CD8-positive, alpha-beta T cell (primary cell): ENCODE measurements at regions of chr17 and their contacts with region 1.

Region 1: DNA sequence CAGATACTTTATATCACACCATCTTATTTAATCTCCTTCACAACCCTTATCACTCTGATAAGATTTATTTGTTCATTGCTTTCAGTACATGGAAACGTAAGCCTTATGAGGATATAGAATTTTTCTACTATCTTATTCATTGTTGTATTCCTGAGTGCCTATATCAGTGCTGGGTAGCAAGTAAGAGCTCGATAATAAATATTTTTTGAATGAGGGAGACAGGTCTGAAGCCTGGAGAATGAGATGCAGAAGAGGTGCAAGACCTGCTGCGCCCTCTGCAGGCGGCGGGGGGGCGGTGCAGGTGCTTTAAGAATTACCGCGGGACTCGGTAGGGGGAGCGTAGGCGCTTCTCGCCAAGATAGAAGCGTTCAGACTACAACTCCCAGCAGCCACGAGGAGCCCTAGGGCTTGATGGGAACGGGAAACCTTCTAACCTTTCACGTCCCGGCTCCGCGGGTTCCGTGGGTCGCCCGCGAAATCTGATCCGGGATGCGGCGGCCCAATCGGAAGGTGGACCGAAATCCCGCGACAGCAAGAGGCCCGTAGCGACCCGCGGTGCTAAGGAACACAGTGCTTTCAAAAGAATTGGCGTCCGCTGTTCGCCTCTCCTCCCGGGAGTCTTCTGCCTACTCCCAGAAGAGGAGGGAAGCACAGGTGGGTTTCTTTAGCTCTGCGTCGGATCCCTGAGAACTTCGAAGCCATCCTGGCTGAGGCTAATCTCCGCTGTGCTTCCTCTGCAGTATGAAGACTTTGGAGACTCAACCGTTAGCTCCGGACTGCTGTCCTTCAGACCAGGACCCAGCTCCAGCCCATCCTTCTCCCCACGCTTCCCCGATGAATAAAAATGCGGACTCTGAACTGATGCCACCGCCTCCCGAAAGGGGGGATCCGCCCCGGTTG is at the start of gene WRAP53:
- DNase-seq: peak; percentile 93 to 97 (median 95)
- ATAC-seq: peak; percentile 77
- H3K4me3 ChIP-seq: peak within 1 kb of the TSS; percentile 81 to 92
- H3K4me3 Mint-ChIP-seq: peak within 1 kb of the TSS; percentile 97
- H3K27ac ChIP-seq: peak within 1 kb of the TSS; percentile 98 to 100
- H3K27ac Mint-ChIP-seq: peak within 1 kb of the TSS; percentile 100
- H3K4me1 ChIP-seq: peaks cover 32% of the 10 kb centered on the region
- H3K4me1 Mint-ChIP-seq: peaks cover 37% of the 10 kb centered on the region
- H3K27me3 ChIP-seq: no peaks in the 10 kb centered on the region
- H3K27me3 Mint-ChIP-seq: no peaks in the 10 kb centered on the region
- CTCF ChIP-seq: peak; percentile 98
- total RNA-seq, gene WRAP53: 5.2 to 6.6 TPM

Region 2: GRCh38 chr17:7214300-7215135 is 473.6 kb before region 1 on chr17:
- CTCF ChIA-PET with region 1: no interaction called
- POLR2A ChIA-PET with region 1: interaction called, 5 read pairs
- intact Hi-C with region 1: loop called in 1 of 2 experiments (anchors 5 kb)
- DNase-seq: peak; percentile 97 to 100 (median 98)
- ATAC-seq: peak; percentile 75
- H3K4me3 ChIP-seq: peak overlapping the region; percentile 36 to 56
- H3K4me3 Mint-ChIP-seq: peak overlapping the region; percentile 90
- H3K27ac ChIP-seq: peak overlapping the region; percentile 80 to 95
- H3K27ac Mint-ChIP-seq: peak overlapping the region; percentile 95
- H3K4me1 ChIP-seq: peaks cover 51% of the 10 kb centered on the region
- H3K4me1 Mint-ChIP-seq: peaks cover 61% of the 10 kb centered on the region
- H3K27me3 ChIP-seq: no peaks in the 10 kb centered on the region
- H3K27me3 Mint-ChIP-seq: no peaks in the 10 kb centered on the region
- CTCF ChIP-seq: peak; percentile 52

Region 3: GRCh38 chr17:7336240-7337175 is 351.6 kb before region 1 on chr17 and contains the start of gene ACAP1:
- CTCF ChIA-PET with region 1: interaction called, 3 read pairs
- POLR2A ChIA-PET with region 1: interaction called, 12 read pairs
- intact Hi-C with region 1: no loop called
- DNase-seq: peak; percentile 72 to 93 (median 89)
- ATAC-seq: peak; percentile 98
- H3K4me3 ChIP-seq: peak within 1 kb of the TSS; percentile 74 to 76
- H3K4me3 Mint-ChIP-seq: peak within 1 kb of the TSS; percentile 94
- H3K27ac ChIP-seq: peak within 1 kb of the TSS; percentile 60 to 65
- H3K27ac Mint-ChIP-seq: peak within 1 kb of the TSS; percentile 97
- H3K4me1 ChIP-seq: peaks cover 55% of the 10 kb centered on the region
- H3K4me1 Mint-ChIP-seq: peaks cover 61% of the 10 kb centered on the region
- H3K27me3 ChIP-seq: no peaks in the 10 kb centered on the region
- H3K27me3 Mint-ChIP-seq: no peaks in the 10 kb centered on the region
- CTCF ChIP-seq: no peak
- total RNA-seq, gene ACAP1: 432 to 451 TPM

Region 4: DNA sequence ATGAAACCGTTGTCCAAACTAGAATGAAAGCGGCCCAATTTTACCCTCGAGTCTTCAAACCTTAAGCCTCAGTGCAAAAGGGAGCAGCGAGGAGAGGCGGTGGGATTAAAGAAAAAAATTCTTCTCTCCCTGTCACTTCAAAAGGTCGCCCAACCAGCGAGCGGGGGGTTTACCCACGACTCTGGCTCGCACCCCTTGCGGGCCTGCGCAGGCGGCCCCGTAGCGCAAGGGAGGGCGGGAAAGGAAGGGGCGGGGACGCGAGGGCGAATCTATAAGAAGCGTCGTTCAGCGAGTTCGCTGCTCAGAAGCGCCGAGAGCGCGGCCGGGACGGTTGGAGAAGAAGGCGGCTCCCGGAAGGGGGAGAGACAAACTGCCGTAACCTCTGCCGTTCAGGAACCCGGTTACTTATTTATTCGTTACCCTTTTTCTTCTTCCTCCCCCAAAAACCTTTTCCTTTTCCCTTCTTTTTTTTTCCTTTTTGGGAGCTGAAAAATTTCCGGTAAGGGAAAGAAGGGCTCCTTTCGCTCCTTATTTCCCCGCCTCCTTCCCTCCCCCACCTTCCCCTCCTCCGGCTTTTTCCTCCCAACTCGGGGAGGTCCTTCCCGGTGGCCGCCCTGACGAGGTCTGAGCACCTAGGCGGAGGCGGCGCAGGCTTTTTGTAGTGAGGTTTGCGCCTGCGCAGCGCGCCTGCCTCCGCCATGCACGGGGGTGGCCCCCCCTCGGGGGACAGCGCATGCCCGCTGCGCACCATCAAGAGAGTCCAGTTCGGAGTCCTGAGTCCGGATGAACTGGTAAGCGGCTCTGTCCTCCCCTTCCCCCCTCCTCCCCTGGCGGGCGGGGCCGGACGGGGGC is 203.9 kb before region 1 on chr17 and contains the start of gene POLR2A:
- CTCF ChIA-PET with region 1: interaction called, 3 read pairs
- POLR2A ChIA-PET with region 1: interaction called, 37 read pairs
- intact Hi-C with region 1: no loop called
- DNase-seq: peak; percentile 96 to 99 (median 98)
- ATAC-seq: peak; percentile 66
- H3K4me3 ChIP-seq: peak within 1 kb of the TSS; percentile 95 to 98
- H3K4me3 Mint-ChIP-seq: peak within 1 kb of the TSS; percentile 100
- H3K27ac ChIP-seq: peak within 1 kb of the TSS; percentile 99 to 100
- H3K27ac Mint-ChIP-seq: peak within 1 kb of the TSS; percentile 100
- H3K4me1 ChIP-seq: peaks cover 58% of the 10 kb centered on the region
- H3K4me1 Mint-ChIP-seq: peaks cover 74% of the 10 kb centered on the region
- H3K27me3 ChIP-seq: no peaks in the 10 kb centered on the region
- H3K27me3 Mint-ChIP-seq: no peaks in the 10 kb centered on the region
- CTCF ChIP-seq: no peak
- total RNA-seq, gene POLR2A: 508 to 546 TPM

Region 5: DNA sequence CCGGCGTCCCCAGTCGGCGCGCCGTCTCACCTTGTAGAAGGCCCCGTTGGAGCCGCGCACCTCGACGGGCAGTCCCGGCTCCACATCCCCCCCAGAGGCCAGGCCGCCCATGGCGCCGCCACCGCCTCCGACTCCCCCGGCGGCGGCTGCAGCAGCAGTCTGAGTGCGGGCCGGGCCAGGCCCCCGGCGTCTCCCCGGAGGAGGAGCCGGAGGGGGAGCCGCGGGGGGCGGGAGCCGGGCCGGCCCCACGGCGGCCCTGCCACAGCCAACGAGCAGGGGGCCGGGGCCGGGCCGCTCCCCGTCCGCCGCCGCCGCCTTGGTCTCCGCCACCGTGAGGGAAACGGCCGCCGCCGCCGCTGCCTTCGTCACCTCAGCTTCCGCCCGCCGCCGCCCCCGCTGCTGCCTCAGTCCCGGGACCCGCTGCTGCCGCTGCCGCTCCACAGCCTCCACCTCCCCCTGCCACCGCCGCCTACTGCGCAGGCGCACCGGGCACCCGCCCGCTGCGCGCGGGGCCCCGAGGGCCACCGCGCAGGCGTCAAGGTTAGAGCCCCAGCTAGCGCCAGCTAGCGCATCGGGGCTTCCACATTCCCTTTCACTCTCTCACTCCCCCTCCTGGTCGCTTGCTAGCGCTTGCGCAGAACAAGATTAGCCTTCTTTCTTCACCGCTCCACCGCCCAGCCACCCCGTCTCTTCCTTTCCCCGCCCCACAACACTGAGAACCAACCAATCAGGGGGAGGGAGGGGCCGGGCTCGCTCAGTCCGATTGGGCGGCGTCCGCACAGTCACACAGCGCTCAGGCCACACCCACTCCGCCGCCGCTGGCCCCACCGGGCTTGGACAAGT is 73.5 kb before region 1 on chr17 and contains the start of gene FXR2:
- CTCF ChIA-PET with region 1: interaction called, 22 read pairs
- POLR2A ChIA-PET with region 1: interaction called, 46 read pairs
- intact Hi-C with region 1: loop called (anchors 1 kb)
- DNase-seq: peak; percentile 96 to 100 (median 98)
- ATAC-seq: peak; percentile 87
- H3K4me3 ChIP-seq: peak within 1 kb of the TSS; percentile 78 to 86
- H3K4me3 Mint-ChIP-seq: peak within 1 kb of the TSS; percentile 89
- H3K27ac ChIP-seq: peak within 1 kb of the TSS; percentile 70 to 89
- H3K27ac Mint-ChIP-seq: peak within 1 kb of the TSS; percentile 96
- H3K4me1 ChIP-seq: peaks cover 30% of the 10 kb centered on the region
- H3K4me1 Mint-ChIP-seq: peaks cover 38% of the 10 kb centered on the region
- H3K27me3 ChIP-seq: no peaks in the 10 kb centered on the region
- H3K27me3 Mint-ChIP-seq: no peaks in the 10 kb centered on the region
- CTCF ChIP-seq: peak; percentile 39
- total RNA-seq, gene FXR2: 18.8 to 21.7 TPM

Region 6: DNA sequence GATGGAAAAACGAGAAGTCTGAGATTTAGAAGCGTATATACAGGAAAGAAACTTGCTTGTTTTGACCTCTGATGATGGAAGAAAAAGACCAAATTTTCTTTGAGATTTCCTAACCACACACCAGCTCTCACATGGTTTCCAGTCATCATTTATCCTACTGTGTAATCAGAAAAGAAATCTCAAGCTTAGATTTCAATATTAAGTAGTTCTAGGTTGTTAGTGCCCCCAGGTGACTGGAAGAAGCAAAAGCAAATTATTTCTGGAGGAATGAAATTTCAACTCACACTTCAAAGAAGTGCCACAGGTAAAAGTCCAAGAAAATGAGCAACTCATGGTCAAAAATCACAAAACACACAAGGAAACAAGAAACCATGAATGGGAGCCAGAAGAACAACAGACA is 94.1 kb after region 1 on chr17:
- CTCF ChIA-PET with region 1: no interaction called
- POLR2A ChIA-PET with region 1: no interaction called
- intact Hi-C with region 1: no loop called
- DNase-seq: no peak
- ATAC-seq: no peak
- H3K4me3 ChIP-seq: no peak overlapping the region
- H3K4me3 Mint-ChIP-seq: no peak overlapping the region
- H3K27ac ChIP-seq: no peak overlapping the region
- H3K27ac Mint-ChIP-seq: no peak overlapping the region
- H3K4me1 ChIP-seq: no peaks in the 10 kb centered on the region
- H3K4me1 Mint-ChIP-seq: no peaks in the 10 kb centered on the region
- H3K27me3 ChIP-seq: no peaks in the 10 kb centered on the region
- H3K27me3 Mint-ChIP-seq: peaks cover 9% of the 10 kb centered on the region
- CTCF ChIP-seq: no peak

Region 7: DNA sequence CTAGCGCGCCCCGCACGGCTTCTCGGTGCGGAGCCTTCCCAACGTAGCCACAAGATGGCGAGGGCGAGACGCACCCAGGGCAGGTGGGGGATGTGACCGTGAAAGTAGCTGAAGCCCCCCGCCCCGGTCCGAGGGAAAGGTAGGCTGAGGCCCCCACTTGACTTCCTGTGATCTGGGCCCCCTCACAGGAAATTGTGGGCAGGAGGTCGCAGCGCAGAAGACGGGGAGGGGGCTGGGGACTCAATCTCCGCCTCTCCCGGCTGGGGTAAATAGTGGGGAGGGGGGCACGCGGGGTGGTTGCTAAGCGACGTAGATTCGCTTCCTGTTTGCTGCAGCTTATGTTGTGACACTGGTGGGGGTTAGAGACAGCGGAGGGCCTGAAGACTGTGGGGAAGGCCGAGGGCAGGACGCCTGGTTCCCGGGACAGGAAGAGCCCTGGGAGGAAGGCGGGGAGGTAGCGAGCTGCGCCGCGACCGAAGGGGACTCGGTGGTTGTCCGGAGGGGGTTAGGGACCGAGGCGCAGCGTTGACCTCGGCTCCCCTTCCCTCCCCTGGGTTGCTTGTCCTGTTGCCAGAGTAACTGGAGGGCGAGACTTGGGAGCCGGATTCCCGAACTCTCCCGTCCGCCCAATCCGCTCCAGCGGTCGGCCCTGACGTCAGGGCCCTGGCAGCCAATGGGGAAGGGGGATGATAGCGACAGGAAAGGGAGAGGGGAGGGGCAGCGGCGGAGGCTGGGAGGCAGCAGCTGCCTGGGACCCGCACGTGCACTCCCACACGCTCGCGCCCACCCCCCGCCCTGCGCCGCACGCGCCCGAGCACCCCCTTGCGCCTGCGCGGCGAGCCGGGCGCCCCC is 147.0 kb after region 1 on chr17:
- CTCF ChIA-PET with region 1: interaction called, 3 read pairs
- POLR2A ChIA-PET with region 1: interaction called, 14 read pairs
- intact Hi-C with region 1: loop called (anchors 2 to 5 kb)
- DNase-seq: peak; percentile 75 to 98 (median 85)
- ATAC-seq: peak; percentile 54
- H3K4me3 ChIP-seq: peak overlapping the region; percentile 90 to 97
- H3K4me3 Mint-ChIP-seq: peak overlapping the region; percentile 96
- H3K27ac ChIP-seq: peak overlapping the region; percentile 99
- H3K27ac Mint-ChIP-seq: peak overlapping the region; percentile 99
- H3K4me1 ChIP-seq: peaks cover 45% of the 10 kb centered on the region
- H3K4me1 Mint-ChIP-seq: peaks cover 45% of the 10 kb centered on the region
- H3K27me3 ChIP-seq: no peaks in the 10 kb centered on the region
- H3K27me3 Mint-ChIP-seq: no peaks in the 10 kb centered on the region
- CTCF ChIP-seq: peak; percentile 69

Region 8: GRCh38 chr17:7903154-7904103 is 215.3 kb after region 1 on chr17:
- CTCF ChIA-PET with region 1: no interaction called
- POLR2A ChIA-PET with region 1: no interaction called
- intact Hi-C with region 1: no loop called
- DNase-seq: no peak
- ATAC-seq: no peak
- H3K4me3 ChIP-seq: no peak overlapping the region
- H3K4me3 Mint-ChIP-seq: no peak overlapping the region
- H3K27ac ChIP-seq: no peak overlapping the region
- H3K27ac Mint-ChIP-seq: peak overlapping the region; percentile 66
- H3K4me1 ChIP-seq: no peaks in the 10 kb centered on the region
- H3K4me1 Mint-ChIP-seq: no peaks in the 10 kb centered on the region
- H3K27me3 ChIP-seq: no peaks in the 10 kb centered on the region
- H3K27me3 Mint-ChIP-seq: no peaks in the 10 kb centered on the region
- CTCF ChIP-seq: no peak

Region 9: GRCh38 chr17:8038954-8039610 is 350.9 kb after region 1 on chr17 and contains the start of gene ALOX15B:
- CTCF ChIA-PET with region 1: no interaction called
- POLR2A ChIA-PET with region 1: no interaction called
- intact Hi-C with region 1: no loop called
- DNase-seq: no peak
- ATAC-seq: no peak
- H3K4me3 ChIP-seq: no peak within 1 kb of the TSS
- H3K4me3 Mint-ChIP-seq: peak within 1 kb of the TSS; percentile 26
- H3K27ac ChIP-seq: no peak within 1 kb of the TSS
- H3K27ac Mint-ChIP-seq: no peak within 1 kb of the TSS
- H3K4me1 ChIP-seq: peaks cover 4% of the 10 kb centered on the region
- H3K4me1 Mint-ChIP-seq: peaks cover 2% of the 10 kb centered on the region
- H3K27me3 ChIP-seq: peaks cover 0 to 8% of the 10 kb centered on the region in 2 experiments
- H3K27me3 Mint-ChIP-seq: peaks cover 23% of the 10 kb centered on the region
- CTCF ChIP-seq: no peak
- total RNA-seq, gene ALOX15B: not detected

Region 10: DNA sequence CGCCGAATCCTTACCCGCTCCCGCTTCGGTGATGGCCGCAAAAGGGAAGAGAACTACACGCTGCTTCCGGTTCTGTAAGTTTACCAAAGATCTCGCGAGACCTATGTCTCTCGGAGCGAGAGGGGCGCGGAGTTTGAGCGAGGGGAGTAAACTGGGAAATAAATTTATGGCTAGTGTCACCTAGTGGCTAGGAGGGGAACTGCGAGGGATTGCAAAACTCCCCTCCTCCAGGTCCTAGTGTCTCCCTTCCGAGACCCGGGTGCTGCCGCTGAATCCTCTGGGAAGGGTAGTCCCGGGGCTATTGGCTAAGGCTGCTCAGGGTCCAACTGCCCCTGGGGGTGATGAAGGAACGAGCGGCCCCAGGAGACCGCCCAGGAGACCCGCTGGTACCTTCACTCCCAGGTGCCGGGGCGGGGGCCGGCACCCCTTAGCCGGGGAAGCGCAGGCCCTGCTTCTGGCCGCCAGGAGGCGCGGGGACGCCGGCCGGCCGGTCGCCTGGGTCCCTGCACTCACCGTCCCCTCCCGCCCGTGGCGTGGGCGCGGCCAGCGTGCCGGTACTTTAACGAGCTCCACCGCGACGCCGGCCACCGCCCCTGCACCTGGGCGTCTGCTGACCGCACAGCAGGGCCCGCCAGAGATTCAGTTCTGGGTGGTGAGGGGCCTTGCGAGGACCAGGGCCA is 695.1 kb after region 1 on chr17 and contains the start of gene RPL26:
- CTCF ChIA-PET with region 1: no interaction called
- POLR2A ChIA-PET with region 1: no interaction called
- intact Hi-C with region 1: loop called in 1 of 2 experiments (anchors 5 kb)
- DNase-seq: peak; percentile 88 to 98 (median 95)
- ATAC-seq: peak; percentile 89
- H3K4me3 ChIP-seq: peak within 1 kb of the TSS; percentile 70 to 72
- H3K4me3 Mint-ChIP-seq: peak within 1 kb of the TSS; percentile 96
- H3K27ac ChIP-seq: peak within 1 kb of the TSS; percentile 71 to 76
- H3K27ac Mint-ChIP-seq: peak within 1 kb of the TSS; percentile 93
- H3K4me1 ChIP-seq: peaks cover 40% of the 10 kb centered on the region
- H3K4me1 Mint-ChIP-seq: peaks cover 69% of the 10 kb centered on the region
- H3K27me3 ChIP-seq: no peaks in the 10 kb centered on the region
- H3K27me3 Mint-ChIP-seq: no peaks in the 10 kb centered on the region
- CTCF ChIP-seq: peak; percentile 100
- total RNA-seq, gene RPL26: 2,888 to 2,889 TPM

Region 11: DNA sequence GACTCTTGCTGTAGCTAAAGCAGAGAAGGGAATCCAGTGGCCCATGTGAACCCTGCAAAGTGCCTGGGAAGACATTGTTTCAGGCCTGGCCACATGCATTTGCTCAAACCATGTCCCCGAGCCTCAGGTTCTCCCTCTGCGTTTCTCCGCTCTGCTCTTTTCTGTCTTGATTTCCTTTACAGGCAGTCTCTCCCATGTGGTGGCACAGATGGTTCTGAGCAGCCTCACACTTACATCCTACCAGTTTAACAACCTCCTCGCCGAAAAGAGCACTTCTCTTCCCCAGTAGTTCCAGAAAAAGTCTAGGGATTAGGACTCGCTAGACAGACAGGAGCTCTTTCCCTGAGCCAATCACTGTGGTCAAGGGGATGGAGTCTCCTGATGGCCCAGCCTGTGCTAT is 970.7 kb after region 1 on chr17:
- CTCF ChIA-PET with region 1: no interaction called
- POLR2A ChIA-PET with region 1: no interaction called
- intact Hi-C with region 1: no loop called
- DNase-seq: no peak
- ATAC-seq: no peak
- H3K4me3 ChIP-seq: no peak overlapping the region
- H3K4me3 Mint-ChIP-seq: no peak overlapping the region
- H3K27ac ChIP-seq: no peak overlapping the region
- H3K27ac Mint-ChIP-seq: no peak overlapping the region
- H3K4me1 ChIP-seq: no peaks in the 10 kb centered on the region
- H3K4me1 Mint-ChIP-seq: no peaks in the 10 kb centered on the region
- H3K27me3 ChIP-seq: no peaks in the 10 kb centered on the region
- H3K27me3 Mint-ChIP-seq: peaks cover 24% of the 10 kb centered on the region
- CTCF ChIP-seq: no peak